Transverse colon (tissue), 4 donors: ENCODE measurements at regions of chr16 and their contacts with region 1.

Region 1: GRCh38 chr16:14285513-14286385 is 214.6 kb downstream of the MRTFB start:
- DNase-seq: peak; percentile 95
- H3K4me3 ChIP-seq: peak overlapping the region; percentile 77 to 90 (median 84)
- H3K27ac ChIP-seq: peak overlapping the region; percentile 86 to 91 (median 88)
- H3K4me1 ChIP-seq: peaks cover 0 to 16% (median 9%) of the 10 kb centered on the region in 4 donors
- H3K27me3 ChIP-seq: no peaks in the 10 kb centered on the region
- CTCF ChIP-seq: no peak
- EP300 ChIP-seq: no peak
- POLR2A ChIP-seq: no peak

Region 2: DNA sequence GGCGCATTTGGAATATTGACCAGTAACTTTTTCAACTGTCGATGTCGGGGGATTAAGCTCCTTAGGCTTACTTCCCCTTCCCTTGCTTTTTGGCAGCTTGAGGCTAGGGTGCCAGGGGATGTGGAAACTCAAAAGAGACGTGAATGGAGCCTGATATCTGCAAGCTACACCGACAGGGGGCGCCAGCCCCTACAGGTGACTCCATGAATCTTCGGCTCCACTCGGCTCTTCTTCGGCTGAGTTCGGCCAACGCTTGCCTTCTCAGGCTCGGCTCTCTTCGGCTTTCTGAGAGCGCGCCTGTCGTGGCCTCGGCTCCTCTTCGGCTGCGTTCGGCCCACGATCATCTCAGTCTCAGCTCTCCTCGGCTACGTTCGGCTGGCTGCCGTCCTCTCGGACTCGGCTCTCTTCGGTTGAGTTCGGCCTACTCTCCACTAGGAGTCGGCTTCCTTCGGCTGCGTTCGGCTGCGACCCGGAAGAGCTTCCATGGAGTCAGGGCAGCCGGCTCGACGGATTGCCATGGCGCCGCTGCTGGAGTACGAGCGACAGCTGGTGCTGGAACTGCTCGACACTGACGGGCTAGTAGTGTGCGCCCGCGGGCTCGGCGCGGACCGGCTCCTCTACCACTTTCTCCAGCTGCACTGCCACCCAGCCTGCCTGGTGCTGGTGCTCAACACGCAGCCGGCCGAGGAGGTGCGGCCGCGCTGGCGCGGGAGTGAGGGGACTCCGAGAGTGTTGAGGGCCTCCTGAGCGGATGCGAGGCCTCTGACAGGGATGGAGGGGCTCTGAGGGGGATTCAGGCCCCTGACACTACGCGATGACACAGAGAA is 365.9 kb before region 1 on chr16 and contains the start of gene ERCC4:
- in situ Hi-C with region 1: loop called in 3 of 4 experiments (anchors 5 to 10 kb)
- intact Hi-C with region 1: no loop called
- DNase-seq: peak; percentile 99
- H3K4me3 ChIP-seq: peak within 1 kb of the TSS; percentile 83 to 98 (median 92)
- H3K27ac ChIP-seq: peak within 1 kb of the TSS; percentile 83 to 92 (median 86)
- H3K4me1 ChIP-seq: peaks cover 6 to 24% (median 12%) of the 10 kb centered on the region in 4 donors
- H3K27me3 ChIP-seq: no peaks in the 10 kb centered on the region
- CTCF ChIP-seq: peak; percentile 83 to 98 (median 87)
- EP300 ChIP-seq: no peak
- POLR2A ChIP-seq: peak; percentile 62
- total RNA-seq, gene ERCC4: 3.8 to 14.1 (median 4.8) TPM